Transverse colon (tissue), 4 donors: ENCODE measurements at regions of chr20 and their contacts with region 1.

Region 1: GRCh38 chr20:42688576-42688975 is 501.1 kb downstream of the PTPRT start:
- DNase-seq: no peak
- H3K4me3 ChIP-seq: no peak overlapping the region
- H3K27ac ChIP-seq: no peak overlapping the region
- H3K4me1 ChIP-seq: no peaks in the 10 kb centered on the region
- H3K27me3 ChIP-seq: no peaks in the 10 kb centered on the region
- CTCF ChIP-seq: no peak
- EP300 ChIP-seq: no peak
- POLR2A ChIP-seq: no peak

Region 2: DNA sequence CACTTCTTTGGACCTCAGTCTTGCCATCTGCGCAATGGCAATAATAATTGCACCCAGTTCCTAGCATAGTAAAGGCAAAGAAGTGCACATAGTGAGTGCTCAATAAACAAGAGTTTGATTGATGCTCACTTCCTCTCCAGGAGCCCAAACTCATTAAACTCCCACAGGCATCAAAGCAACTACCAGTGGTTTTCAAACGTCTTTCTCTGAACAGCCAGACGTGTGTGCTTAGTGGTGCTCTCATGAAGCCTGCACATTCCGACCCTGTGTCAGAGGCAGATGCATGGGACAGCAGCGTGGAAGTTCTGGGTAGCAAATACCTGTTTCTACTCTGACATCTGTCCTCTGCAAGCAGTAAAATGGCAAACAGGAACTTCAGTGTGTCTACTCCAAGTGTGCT is 1853.3 kb before region 1 on chr20:
- in situ Hi-C with region 1: no loop called
- intact Hi-C with region 1: loop called (anchors 5 kb)
- DNase-seq: no peak
- H3K4me3 ChIP-seq: no peak overlapping the region
- H3K27ac ChIP-seq: no peak overlapping the region
- H3K4me1 ChIP-seq: no peaks in the 10 kb centered on the region
- H3K27me3 ChIP-seq: peaks cover 11% of the 10 kb centered on the region
- CTCF ChIP-seq: no peak
- EP300 ChIP-seq: no peak
- POLR2A ChIP-seq: no peak